Activated naive CD4-positive, alpha-beta T cell treated with anti-CD3 and anti-CD28 coated beads for 36 hours (primary cell): ENCODE measurements at regions of chr19 and their contacts with region 1.

Region 1: DNA sequence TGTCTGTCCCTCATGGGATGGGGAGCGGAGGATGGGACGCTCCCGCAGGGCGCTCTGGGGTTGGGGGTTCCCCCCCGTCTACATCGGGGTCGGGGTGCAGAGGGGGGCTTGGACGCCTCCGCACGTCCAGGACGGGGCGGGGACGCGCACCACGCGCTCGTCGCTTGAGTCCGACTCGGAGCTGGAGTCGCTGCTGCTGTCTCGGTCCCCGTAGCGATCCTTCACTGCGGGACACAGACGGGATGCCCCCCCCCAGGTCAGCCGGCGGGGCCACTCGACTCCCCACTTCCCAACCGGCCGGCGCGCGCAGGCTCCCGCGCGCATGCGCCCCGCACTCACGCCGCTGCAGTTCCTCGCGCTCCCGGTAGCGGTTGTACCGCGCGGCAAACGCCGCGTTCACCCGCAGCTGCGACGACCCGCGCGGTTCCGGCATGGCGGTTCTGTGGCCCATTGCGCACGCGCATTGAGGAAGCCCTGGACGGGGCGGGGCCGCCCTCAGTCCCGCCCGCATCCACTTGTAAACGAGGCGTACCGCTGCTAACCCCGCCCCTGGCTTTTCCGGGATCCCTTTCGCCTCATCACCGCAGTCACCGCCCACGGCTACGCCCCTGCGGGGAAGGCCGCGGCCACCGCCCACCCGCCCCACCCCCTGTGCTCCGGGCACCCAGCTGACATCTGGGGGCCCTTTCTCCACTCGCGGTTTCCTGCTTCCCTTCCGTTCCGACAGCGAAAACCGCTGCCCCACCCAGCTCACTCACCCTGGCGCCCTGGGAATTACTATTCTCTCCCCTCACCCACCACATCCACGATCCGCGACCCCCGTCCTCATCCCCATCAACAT is at the start of gene KRI1:
- DNase-seq: peak; percentile 99
- H3K4me3 Mint-ChIP-seq: peak within 1 kb of the TSS; percentile 94
- H3K27ac Mint-ChIP-seq: peak within 1 kb of the TSS; percentile 98
- H3K4me1 Mint-ChIP-seq: peaks cover 49% of the 10 kb centered on the region
- H3K27me3 Mint-ChIP-seq: no peaks in the 10 kb centered on the region
- total RNA-seq, gene KRI1: 50.2 to 51.7 TPM

Region 2: GRCh38 chr19:10106100-10106936 is 459.5 kb before region 1 on chr19 and contains the start of gene PPAN:
- CTCF ChIA-PET with region 1: no interaction called
- intact Hi-C with region 1: loop called (anchors 1 kb)
- DNase-seq: peak; percentile 99
- H3K4me3 Mint-ChIP-seq: peak within 1 kb of the TSS; percentile 80
- H3K27ac Mint-ChIP-seq: peak within 1 kb of the TSS; percentile 100
- H3K4me1 Mint-ChIP-seq: peaks cover 69% of the 10 kb centered on the region
- H3K27me3 Mint-ChIP-seq: no peaks in the 10 kb centered on the region
- total RNA-seq, gene PPAN: 59.7 to 60.0 TPM

Region 3: DNA sequence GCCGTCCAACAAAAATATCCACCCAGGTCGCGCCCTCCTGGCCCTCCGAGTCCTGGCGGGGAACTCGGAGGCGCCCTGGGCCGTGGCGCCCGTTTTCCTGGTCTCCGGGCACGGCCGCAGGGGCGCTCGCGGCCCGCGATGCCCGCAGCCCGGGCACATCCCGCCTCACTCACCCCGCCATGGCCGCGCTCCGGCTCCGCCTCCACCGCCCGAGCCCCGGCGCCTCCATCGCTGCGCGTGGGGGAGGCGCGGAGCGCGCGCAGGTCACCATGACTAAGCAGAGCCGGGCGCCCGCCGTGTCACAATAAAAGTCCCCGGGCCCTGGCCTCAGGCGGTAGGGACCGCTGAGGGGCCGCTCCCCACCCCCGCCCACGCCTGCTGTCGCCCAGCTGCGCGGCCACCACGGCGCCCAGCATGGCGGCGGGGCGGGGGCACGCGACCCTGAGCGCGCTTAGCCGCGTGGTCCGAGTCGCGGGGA is 63.2 kb before region 1 on chr19:
- CTCF ChIA-PET with region 1: interaction called, 4 read pairs
- intact Hi-C with region 1: loop called (anchors 1 kb)
- DNase-seq: peak; percentile 93
- H3K4me3 Mint-ChIP-seq: peak overlapping the region; percentile 89
- H3K27ac Mint-ChIP-seq: peak overlapping the region; percentile 88
- H3K4me1 Mint-ChIP-seq: peaks cover 37% of the 10 kb centered on the region
- H3K27me3 Mint-ChIP-seq: no peaks in the 10 kb centered on the region

Region 4: GRCh38 chr19:10580979-10581631 is 15.3 kb after region 1 on chr19:
- CTCF ChIA-PET with region 1: interaction called, 36 read pairs
- intact Hi-C with region 1: no loop called
- DNase-seq: peak; percentile 97
- H3K4me3 Mint-ChIP-seq: no peak overlapping the region
- H3K27ac Mint-ChIP-seq: no peak overlapping the region
- H3K4me1 Mint-ChIP-seq: peaks cover 6% of the 10 kb centered on the region
- H3K27me3 Mint-ChIP-seq: no peaks in the 10 kb centered on the region

Region 5: DNA sequence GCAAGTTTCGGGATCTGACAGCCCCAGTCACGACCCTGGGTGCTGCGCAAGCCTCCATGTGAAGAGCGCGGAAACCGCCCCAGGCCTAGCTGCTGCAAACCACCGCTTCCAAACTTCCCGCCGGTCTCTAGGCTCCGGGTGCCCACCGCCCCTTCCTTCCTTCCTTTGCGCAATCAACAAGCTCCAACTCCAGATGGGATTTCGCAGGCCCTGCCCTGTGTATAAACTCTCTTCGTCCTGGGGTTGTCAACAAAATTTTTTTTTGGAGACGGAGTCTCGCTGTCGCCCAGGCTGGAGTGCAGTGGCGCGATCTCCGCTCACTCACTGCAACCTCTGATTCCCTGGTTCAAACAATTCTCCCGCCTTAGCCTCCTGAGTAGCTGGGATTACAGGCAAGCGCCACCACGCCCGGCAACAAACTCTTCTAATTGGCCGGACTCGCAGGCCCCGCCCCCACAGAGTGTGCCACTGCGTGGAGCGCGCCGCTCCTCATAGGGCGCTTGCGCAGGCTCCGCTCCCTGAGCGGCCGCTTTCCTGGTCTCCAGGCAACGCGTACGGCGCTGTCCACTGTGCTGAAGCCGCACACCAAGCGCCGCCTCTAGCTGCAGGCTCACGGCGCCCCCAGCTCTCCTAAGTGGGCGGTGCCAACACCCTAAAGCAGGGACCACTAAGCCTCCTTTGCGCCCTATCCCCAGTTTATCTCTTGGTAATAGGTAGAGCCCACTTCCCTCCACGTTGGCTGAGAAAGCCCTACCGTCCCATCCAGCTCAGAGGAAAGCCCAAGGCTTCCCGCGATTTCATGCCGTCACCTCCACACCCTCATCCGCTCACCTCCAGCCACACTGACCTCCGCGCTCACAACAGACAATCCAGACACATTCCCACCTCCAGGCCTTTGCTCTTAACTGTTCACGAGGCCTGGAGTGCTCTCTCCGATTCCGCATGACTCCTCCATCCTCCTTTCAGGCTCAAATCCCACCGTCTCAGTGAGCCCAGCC is 129.9 kb after region 1 on chr19:
- CTCF ChIA-PET with region 1: interaction called, 15 read pairs
- intact Hi-C with region 1: loop called (anchors 5 kb)
- DNase-seq: peak; percentile 92
- H3K4me3 Mint-ChIP-seq: peak overlapping the region; percentile 68
- H3K27ac Mint-ChIP-seq: no peak overlapping the region
- H3K4me1 Mint-ChIP-seq: peaks cover 17% of the 10 kb centered on the region
- H3K27me3 Mint-ChIP-seq: peaks cover 8% of the 10 kb centered on the region

Region 6: DNA sequence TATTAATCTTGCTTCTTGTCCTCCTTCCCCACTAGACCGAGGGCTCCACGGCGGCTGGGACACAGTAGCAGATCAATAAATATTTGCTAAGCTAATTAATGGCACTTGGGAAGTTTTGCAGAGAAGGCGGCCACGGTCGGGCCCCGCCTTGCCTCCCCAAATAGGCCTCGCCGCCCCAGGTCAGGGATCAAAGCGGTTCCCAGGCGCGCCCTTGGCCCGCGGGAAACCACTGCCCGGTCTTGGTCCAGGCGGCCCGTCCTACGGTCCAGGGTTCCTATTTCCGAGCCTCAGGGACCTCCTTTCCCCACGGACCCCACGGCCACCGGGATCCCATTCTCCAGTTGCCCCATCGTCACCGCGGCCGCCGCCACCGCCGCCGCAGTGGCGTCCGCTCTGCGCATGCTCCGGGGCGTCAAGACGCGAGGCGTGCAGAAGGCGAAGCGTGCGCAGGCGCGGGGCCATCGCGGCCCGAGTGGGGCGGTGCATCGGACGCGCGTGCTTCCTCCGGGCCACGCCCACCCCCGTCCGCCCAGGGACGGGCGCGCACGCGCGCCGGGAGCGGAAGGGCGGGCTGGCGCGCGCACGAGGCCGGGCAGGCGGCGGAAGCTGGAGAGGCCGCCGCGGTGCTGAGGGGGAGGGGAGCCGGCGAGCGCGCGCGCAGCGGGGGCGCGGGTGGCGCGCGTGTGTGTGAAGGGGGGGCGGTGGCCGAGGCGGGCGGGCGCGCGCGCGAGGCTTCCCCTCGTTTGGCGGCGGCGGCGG is 394.7 kb after region 1 on chr19 and contains the start of gene SMARCA4:
- CTCF ChIA-PET with region 1: no interaction called
- intact Hi-C with region 1: loop called (anchors 2 kb)
- DNase-seq: peak; percentile 97
- H3K4me3 Mint-ChIP-seq: peak within 1 kb of the TSS; percentile 91
- H3K27ac Mint-ChIP-seq: peak within 1 kb of the TSS; percentile 90
- H3K4me1 Mint-ChIP-seq: peaks cover 37% of the 10 kb centered on the region
- H3K27me3 Mint-ChIP-seq: no peaks in the 10 kb centered on the region
- total RNA-seq, gene SMARCA4: 88.6 to 98.6 TPM